Left lung (tissue), 14 donors: ENCODE measurements at regions of chr11 and their contacts with region 1.

Region 1: DNA sequence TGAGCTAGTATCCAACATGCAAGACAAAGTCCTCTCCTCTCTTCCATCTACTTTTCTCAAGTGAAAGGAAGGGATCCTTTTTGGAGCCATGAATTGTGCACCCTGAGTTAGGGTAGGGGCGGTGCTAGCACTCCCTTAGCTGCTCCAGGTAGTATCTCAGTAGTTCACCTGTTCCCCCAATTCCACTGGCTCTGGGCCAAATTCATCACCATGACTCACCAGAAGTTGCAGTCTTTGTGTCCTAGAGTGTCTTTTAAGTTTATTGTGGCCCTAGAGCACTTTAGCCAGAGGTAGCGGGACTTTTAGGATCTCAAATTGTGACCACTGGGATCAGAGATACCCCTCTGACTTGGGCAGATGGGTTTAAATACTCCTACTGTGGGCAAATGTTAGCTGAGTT is 398.6 kb upstream of the ANO5 start:
- DNase-seq: no peak
- ATAC-seq: no peak
- H3K4me3 ChIP-seq: no peak overlapping the region
- H3K27ac ChIP-seq: no peak overlapping the region
- H3K4me1 ChIP-seq: no peaks in the 10 kb centered on the region
- H3K27me3 ChIP-seq: no peaks in the 10 kb centered on the region
- CTCF ChIP-seq: no peak

Region 2: DNA sequence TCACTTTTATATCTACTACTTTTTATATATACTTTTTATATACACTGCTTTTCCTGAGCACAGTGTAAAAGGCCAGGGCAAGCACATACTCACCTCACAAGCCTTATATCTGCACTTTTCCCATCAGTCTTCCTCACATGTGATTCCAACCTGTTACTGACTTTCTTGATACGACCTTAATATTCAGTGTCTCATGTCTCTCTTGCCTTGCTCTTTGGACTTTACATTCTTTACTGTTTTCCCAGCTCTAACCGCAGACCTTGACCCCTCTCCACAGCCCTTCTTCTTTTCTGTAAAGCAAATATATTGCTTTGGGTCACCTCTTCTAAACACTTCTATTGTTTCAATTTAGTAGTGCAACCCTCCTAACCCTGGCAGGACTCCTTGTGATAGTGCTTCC is 45.5 kb after region 1 on chr11:
- intact Hi-C with region 1: loop called in 1 of 2 experiments (anchors 10 kb)
- DNase-seq: no peak
- ATAC-seq: no peak
- H3K4me3 ChIP-seq: no peak overlapping the region
- H3K27ac ChIP-seq: no peak overlapping the region
- H3K4me1 ChIP-seq: no peaks in the 10 kb centered on the region
- H3K27me3 ChIP-seq: no peaks in the 10 kb centered on the region
- CTCF ChIP-seq: no peak